ENCODE measurements at regions of chr18 and their contacts with region 1.

Region 1: DNA sequence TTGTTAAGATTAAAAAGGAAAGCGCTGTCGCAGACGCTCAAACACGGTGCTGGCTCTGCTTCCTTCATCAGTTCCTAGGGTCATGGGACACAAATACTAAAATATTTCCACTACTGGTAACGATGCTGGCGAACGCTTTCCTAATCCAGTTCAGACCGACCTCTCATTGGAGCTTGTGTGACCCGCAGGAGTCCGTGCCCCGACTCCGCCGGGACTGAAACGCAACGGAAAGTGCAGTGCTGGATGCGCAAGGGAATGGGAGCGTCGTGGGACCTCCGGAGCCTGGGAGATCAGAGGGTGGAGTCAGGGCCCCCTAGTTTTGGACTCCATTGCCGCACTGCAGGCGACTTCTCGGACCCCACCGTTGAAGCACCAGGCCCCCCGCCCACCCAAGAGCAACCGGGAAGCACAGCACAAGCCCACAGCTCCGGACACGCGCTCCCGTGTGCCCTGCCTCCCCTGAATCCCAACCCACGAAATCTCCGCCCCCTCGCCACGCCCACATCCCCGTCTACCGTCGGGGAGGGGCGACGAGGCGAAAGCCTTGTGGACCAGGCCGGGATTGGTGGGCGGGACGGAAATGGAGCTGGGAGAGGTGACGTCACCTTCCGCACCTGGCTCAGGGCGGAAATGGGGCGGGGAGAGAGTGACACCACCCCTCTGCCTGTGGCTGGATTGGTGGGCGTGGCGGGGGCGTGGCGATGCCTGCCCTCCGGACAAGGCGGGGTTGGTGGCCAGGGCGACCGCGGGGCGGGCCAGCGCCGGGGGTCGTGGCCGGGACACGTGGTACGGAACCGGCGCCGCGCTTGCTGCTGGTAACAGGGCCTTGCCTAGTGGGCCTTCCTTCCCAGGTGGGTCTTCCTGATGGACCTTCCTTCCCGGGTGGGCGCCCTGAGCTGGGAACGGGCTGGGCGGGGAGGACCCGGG is at the start of gene CNDP2:
- DNase-seq: peak; percentile 96
- ATAC-seq: peak; percentile 82
- H3K4me3 ChIP-seq: peak within 1 kb of the TSS; percentile 95
- H3K27ac ChIP-seq: peak within 1 kb of the TSS; percentile 76
- H3K4me1 ChIP-seq: peaks cover 18% of the 10 kb centered on the region
- H3K27me3 ChIP-seq: no peaks in the 10 kb centered on the region
- CTCF ChIP-seq: no peak
- EP300 ChIP-seq: no peak
- POLR2A ChIP-seq: peak; percentile 86
- RAD21 ChIP-seq: no peak
- polyA plus RNA-seq, gene CNDP2: 63.5 to 101 TPM

Region 2: DNA sequence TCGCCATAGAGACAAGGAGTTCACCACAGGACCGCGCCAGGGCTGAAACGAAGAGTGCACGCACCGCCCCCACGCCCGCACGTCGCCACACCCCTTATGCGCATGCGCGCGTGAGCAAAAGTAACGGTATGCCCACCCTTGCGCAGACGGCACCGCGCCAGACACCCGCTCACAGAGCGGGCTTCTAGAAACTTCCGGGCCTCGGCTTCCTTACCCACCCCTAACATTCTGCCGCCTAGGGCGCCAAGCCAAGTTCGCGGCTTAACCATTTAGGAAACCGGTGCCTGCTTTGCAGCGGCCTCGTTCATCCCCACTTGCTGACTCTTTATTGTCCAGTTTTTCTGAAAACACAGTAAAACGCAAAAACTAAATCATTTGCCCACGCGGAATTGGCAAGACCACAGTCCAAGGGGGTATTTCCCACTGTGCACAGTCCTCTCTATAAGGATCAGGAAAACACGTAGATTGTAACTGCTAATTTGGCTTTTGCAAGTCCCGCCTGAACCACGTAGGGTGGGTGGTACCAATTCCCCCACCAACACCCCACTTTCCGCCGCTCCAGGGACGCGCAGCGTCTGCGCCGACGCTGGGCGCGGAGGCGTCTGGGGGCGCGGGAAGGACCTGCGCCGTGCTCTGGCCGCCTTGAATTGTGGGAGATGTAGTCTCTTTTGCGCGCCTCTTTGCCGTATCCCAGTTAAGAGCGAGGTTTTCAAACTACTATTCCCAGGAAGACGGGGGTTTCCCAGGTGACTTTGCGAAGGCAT is 347.9 kb before region 1 on chr18 and contains the starts of genes FBXO15 and TIMM21:
- CTCF ChIA-PET with region 1: no interaction called
- POLR2A ChIA-PET with region 1: no interaction called
- RAD21 ChIA-PET with region 1: interaction called, 4 read pairs
- SMC1A ChIA-PET with region 1: no interaction called
- in situ Hi-C with region 1: no loop called
- intact Hi-C with region 1: loop called (anchors 5 kb)
- DNase-seq: peak; percentile 94
- ATAC-seq: peak; percentile 93
- H3K4me3 ChIP-seq: peak within 1 kb of the TSS; percentile 92
- H3K27ac ChIP-seq: peak within 1 kb of the TSS; percentile 88
- H3K4me1 ChIP-seq: peaks cover 6% of the 10 kb centered on the region; the same call in 1 of the 2 replicates
- H3K27me3 ChIP-seq: no peaks in the 10 kb centered on the region
- CTCF ChIP-seq: no peak
- EP300 ChIP-seq: no peak
- POLR2A ChIP-seq: peak; percentile 77
- RAD21 ChIP-seq: no peak
- polyA plus RNA-seq, gene FBXO15: 0.20 to 0.24 TPM
- polyA plus RNA-seq, gene TIMM21: 111 to 136 TPM

Region 3: DNA sequence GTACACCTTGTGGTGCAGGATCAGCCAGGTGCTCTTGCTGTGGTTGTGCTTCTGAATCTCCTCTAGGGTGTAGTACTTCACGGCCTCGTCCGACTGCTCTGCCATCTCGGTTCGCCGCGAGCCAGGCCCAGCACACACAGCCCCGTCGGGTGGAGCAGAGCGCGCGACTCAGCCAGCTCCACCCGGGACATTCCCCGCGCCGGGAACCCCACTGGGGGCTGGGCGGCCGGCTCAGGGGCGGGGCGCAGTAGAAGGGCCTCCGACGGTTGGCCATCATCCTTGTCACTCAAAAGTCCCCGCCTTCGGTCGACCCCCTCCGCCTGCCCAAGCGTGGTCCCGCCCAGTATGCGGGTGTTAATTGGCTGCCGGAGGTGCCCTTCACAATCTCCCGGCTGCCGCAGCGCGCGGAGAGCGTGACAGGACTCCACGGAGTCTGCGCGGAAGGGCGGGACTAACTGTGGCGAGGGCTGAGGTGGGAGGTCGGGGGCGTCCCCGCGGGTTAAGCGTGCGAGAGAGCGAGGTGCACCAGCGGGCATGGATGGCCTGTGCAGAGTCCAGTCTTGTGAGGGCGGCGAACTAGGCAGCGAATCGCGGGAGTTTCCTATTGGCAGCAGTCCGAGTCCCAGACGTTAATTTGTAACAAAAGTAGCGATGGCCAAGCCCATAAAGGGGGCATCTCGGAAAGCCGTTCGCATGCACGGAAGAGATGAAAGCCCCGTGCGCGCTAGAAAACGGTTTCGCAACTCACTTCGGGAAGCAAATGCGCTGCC is 203.9 kb before region 1 on chr18 and contains the start of gene CYB5A:
- CTCF ChIA-PET with region 1: interaction called, 3 read pairs
- POLR2A ChIA-PET with region 1: no interaction called
- RAD21 ChIA-PET with region 1: no interaction called
- SMC1A ChIA-PET with region 1: no interaction called
- in situ Hi-C with region 1: no loop called
- intact Hi-C with region 1: loop called (anchors 5 kb)
- DNase-seq: peak; percentile 87
- ATAC-seq: peak; percentile 99
- H3K4me3 ChIP-seq: peak within 1 kb of the TSS; percentile 68
- H3K27ac ChIP-seq: peak within 1 kb of the TSS; percentile 18; the same call in 1 of the 2 replicates
- H3K4me1 ChIP-seq: peaks cover 3% of the 10 kb centered on the region
- H3K27me3 ChIP-seq: no peaks in the 10 kb centered on the region
- CTCF ChIP-seq: no peak
- EP300 ChIP-seq: no peak
- POLR2A ChIP-seq: peak; percentile 83
- RAD21 ChIP-seq: no peak
- polyA plus RNA-seq, gene CYB5A: 120 to 129 TPM

Region 4: DNA sequence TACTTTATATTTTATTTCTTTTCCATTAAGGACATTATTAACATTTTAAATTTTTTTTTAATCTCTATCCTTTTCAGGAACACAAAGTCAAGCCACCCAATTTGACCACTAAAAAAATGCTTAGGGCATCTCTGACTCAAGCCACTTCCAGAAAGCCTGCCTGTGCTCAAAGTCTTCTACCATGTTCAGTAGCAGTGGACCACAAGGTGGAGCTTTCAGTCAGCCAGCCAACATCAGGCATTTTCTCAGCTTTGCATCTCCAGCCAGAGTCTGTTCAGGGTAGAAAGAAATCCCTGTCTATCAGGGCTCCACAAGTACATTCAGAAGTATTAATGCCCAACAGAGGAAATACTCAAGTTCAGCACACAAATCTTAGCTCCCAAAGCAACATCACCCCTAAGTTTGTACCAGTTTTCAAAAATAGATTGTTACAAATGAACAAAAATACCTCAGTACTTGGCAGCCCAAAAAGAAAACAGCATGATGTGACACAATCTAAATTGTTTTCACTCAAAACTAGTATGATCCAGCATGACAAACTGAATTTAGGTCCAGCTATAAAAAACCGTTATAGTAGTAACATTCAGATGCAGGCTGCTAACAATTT is 142.6 kb before region 1 on chr18:
- CTCF ChIA-PET with region 1: interaction called, 92 read pairs
- POLR2A ChIA-PET with region 1: interaction called, 3 read pairs
- RAD21 ChIA-PET with region 1: interaction called, 31 read pairs
- SMC1A ChIA-PET with region 1: interaction called, 32 read pairs
- in situ Hi-C with region 1: loop called (anchors 5 kb)
- intact Hi-C with region 1: loop called (anchors 1 kb)
- DNase-seq: peak; percentile 24
- ATAC-seq: peak; percentile 88
- H3K4me3 ChIP-seq: no peak overlapping the region
- H3K27ac ChIP-seq: no peak overlapping the region
- H3K4me1 ChIP-seq: peaks cover 3% of the 10 kb centered on the region; the same call in 1 of the 2 replicates
- H3K27me3 ChIP-seq: peaks cover 0 to 2% of the 10 kb centered on the region in 2 experiments; a peak in 1 of 4 replicates
- CTCF ChIP-seq: peak; percentile 67 to 72 (median 71); a peak in 5 of 6 replicates
- EP300 ChIP-seq: no peak
- POLR2A ChIP-seq: no peak
- RAD21 ChIP-seq: peak; percentile 83

Region 5: DNA sequence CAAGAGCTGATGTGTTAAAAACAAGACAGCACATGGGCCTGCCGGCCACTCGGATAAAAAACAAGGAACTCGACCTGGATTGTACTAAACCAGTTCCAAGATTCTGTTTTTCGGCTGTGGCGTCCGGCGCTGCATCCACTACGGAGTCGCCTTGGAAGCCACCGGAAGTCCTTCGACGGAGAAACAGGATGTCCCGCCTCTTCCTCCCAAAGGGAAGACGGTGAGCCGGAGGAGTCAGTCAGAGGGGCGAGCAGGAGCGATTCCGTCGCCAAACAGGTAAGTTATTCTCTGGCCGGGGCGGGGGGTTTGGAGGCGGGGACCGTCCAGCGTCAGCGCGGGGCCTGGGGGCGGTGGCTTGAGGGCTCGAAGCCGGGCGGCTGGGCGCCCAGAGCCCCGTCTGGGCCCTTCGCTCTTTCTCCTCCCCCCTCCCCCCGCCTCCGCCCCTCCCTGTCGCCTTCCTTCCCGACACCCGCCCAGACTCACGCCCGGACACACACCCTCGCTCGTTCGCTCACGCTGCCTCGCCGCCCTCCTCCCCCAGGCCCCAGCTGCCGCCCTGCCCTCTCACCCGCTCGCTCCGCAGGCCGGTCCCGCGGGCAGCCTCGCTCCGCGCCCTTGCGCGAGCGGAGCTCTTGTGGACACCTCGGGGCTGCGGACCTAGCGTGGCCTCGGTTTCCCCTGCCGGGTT is 102.0 kb after region 1 on chr18 and contains the start of gene ZNF407:
- CTCF ChIA-PET with region 1: interaction called, 4 read pairs
- POLR2A ChIA-PET with region 1: interaction called, 5 read pairs
- RAD21 ChIA-PET with region 1: no interaction called
- SMC1A ChIA-PET with region 1: interaction called, 3 read pairs
- in situ Hi-C with region 1: loop called (anchors 5 kb)
- intact Hi-C with region 1: loop called (anchors 1 kb)
- DNase-seq: peak; percentile 61
- ATAC-seq: peak; percentile 90
- H3K4me3 ChIP-seq: peak within 1 kb of the TSS; percentile 99
- H3K27ac ChIP-seq: peak within 1 kb of the TSS; percentile 99
- H3K4me1 ChIP-seq: peaks cover 7% of the 10 kb centered on the region
- H3K27me3 ChIP-seq: no peaks in the 10 kb centered on the region
- CTCF ChIP-seq: no peak
- EP300 ChIP-seq: no peak
- POLR2A ChIP-seq: peak; percentile 70; the same call in 1 of the 2 replicates
- RAD21 ChIP-seq: no peak
- polyA plus RNA-seq, gene ZNF407: 0.69 to 0.88 TPM

Region 6: DNA sequence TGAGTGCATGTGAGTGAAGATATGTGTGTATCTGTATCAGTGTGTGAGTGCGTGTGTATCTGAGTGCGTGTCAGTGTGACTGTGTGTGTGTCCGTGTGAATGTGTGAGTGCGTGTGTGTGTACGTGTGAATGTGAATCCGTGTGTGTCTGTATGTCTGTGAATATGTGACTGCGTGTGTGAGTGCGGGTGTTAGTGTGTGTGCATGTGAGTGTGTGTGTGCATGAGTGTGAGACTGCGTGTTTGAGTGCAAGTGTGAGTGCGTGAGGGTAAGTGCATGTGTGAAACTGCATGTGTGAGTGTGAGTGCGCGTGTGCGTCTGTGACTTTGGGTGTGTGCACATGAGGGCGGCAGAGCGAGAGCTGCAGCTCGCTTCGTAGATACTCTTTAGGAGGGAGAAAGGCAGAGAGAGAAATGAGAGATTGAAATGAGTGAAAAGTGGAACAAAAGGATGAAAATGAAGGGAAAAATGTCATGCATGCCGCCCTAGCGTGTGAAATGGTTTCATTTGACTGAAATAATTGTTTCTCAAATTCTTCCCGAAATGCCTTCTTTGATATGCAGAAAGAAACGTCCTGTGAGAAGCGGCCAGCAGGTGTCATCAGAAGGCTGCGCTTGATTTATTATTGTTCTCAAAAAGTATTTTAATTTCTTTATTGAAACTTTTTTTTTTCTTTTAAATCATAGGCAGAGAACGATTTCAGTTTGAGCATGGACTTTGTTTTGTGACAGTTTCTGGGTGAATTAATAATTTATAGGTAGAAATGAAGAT is 127.4 kb after region 1 on chr18:
- CTCF ChIA-PET with region 1: no interaction called
- POLR2A ChIA-PET with region 1: no interaction called
- RAD21 ChIA-PET with region 1: no interaction called
- SMC1A ChIA-PET with region 1: no interaction called
- in situ Hi-C with region 1: no loop called
- intact Hi-C with region 1: no loop called
- DNase-seq: no peak
- ATAC-seq: no peak
- H3K4me3 ChIP-seq: no peak overlapping the region
- H3K27ac ChIP-seq: no peak overlapping the region
- H3K4me1 ChIP-seq: no peaks in the 10 kb centered on the region
- H3K27me3 ChIP-seq: no peaks in the 10 kb centered on the region
- CTCF ChIP-seq: peak; percentile 2 to 30 (median 27); a peak in 2 of 6 replicates
- EP300 ChIP-seq: no peak
- POLR2A ChIP-seq: no peak
- RAD21 ChIP-seq: peak; percentile 61

Measured in GM12878 (cell line).